Kidney (tissue), 22 donors: ENCODE measurements at regions of chr15 and their contacts with region 1.

Region 1: GRCh38 chr15:84929744-84930371 is 45.4 kb downstream of the SLC28A1 start:
- DNase-seq: peak; percentile 46 to 90 (median 66)
- H3K4me3 ChIP-seq: no peak overlapping the region
- H3K27ac ChIP-seq: no peak overlapping the region
- H3K4me1 ChIP-seq: peaks cover 0 to 9% (median 4%) of the 10 kb centered on the region in 3 donors
- H3K27me3 ChIP-seq: no peaks in the 10 kb centered on the region
- CTCF ChIP-seq: no peak

Region 2: DNA sequence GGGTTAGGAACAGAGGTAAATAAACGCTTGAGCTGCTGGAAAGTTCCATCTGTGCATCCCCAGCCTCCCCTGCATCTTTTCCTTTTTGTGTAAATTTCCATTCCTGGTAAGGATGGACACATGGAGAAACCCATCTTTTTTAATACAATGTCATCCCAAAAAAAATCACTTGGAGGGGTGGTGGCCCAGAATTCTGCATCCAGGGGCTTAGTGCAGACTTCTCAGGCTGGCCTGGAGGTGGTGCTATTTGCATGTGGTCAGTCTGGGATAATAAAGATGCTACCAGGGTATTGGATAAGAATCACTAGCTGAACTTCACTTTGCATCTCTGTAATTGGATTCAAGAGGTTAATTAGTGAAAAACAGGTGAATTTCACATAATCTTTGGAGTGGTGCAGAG is 330.9 kb before region 1 on chr15:
- intact Hi-C with region 1: loop called (anchors 10 kb)
- DNase-seq: peak in 3 of 5 donors; percentile 40 to 67 (median 60)
- H3K4me3 ChIP-seq: no peak overlapping the region
- H3K27ac ChIP-seq: no peak overlapping the region
- H3K4me1 ChIP-seq: no peaks in the 10 kb centered on the region
- H3K27me3 ChIP-seq: no peaks in the 10 kb centered on the region
- CTCF ChIP-seq: peak; percentile 70